GM12878 (cell line): ENCODE measurements at regions of chr4 and their contacts with region 1.

Region 1: DNA sequence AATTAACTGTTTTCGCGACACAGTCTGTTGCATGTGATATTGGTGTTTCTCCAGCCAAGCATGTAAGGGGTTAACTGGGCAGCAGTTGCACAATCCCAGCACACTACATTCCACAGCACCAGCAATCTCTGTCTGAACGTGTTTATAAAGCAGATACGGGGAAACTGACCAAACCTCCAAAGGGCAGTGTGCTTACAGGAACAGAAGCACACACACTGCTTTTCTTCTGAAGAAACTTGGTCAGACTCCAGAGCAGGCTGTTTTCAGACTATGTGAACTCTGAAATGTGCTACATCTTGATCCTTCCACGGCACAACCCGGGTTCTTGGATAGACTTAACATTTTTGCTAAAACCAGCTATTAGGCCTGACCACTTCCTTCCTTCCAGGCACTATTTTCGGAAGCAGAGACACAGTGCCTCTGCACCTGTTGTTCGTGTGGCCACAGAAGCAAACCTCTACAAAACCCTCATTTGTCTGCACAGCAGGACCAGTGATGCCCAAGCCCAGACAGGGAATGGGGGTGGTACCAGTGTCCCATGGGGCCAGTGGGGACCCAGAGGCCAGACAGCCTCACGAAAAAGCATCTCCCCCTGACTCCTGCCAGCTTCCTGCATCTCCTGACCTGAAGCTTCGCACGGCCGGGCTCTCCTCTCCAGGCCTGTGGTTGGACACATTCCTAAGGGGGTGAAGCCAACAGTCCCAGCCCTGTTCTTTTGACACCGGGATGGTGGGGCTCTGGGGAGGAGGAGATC is 90.1 kb downstream of the IRF2 start:
- DNase-seq: peak; percentile 92
- ATAC-seq: peak; percentile 77
- H3K4me3 ChIP-seq: peak overlapping the region; percentile 59; the same call in 1 of the 2 replicates
- H3K27ac ChIP-seq: peak overlapping the region; percentile 88
- H3K4me1 ChIP-seq: peaks cover 68% of the 10 kb centered on the region
- H3K27me3 ChIP-seq: no peaks in the 10 kb centered on the region
- CTCF ChIP-seq: no peak
- EP300 ChIP-seq: peak; percentile 76 to 86
- POLR2A ChIP-seq: peak; percentile 70
- RAD21 ChIP-seq: no peak

Region 2: DNA sequence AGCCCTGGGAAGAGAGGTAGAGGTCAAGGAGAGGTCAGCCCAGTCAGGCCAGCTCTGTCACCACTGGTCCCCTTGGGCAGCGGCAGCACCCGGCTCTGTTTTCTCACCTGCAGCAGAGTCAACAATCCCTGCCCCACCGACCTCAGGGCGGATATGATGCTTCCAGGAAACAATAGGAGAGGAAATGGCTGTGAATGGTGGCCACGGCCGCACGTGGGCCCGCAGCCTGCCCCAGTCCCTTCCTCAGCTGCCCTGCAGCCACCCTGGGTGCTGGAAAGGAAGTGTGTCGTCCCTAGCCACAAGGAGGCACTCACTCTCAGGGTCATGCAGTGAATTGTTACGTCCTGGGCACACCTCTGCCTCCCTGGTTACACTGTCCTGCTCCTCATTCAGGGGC is 74.1 kb before region 1 on chr4:
- CTCF ChIA-PET with region 1: interaction called, 5 read pairs
- POLR2A ChIA-PET with region 1: interaction called, 10 read pairs
- RAD21 ChIA-PET with region 1: interaction called, 7 read pairs
- SMC1A ChIA-PET with region 1: interaction called, 48 read pairs
- in situ Hi-C with region 1: no loop called
- intact Hi-C with region 1: loop called (anchors 2 kb)
- DNase-seq: no peak
- ATAC-seq: peak; percentile 61
- H3K4me3 ChIP-seq: peak overlapping the region; percentile 75; the same call in 1 of the 2 replicates
- H3K27ac ChIP-seq: peak overlapping the region; percentile 94
- H3K4me1 ChIP-seq: peaks cover 47% of the 10 kb centered on the region
- H3K27me3 ChIP-seq: no peaks in the 10 kb centered on the region
- CTCF ChIP-seq: peak; percentile 49 to 59 (median 49)
- EP300 ChIP-seq: no peak
- POLR2A ChIP-seq: peak; percentile 33; the same call in 1 of the 2 replicates
- RAD21 ChIP-seq: peak; percentile 65

Region 3: DNA sequence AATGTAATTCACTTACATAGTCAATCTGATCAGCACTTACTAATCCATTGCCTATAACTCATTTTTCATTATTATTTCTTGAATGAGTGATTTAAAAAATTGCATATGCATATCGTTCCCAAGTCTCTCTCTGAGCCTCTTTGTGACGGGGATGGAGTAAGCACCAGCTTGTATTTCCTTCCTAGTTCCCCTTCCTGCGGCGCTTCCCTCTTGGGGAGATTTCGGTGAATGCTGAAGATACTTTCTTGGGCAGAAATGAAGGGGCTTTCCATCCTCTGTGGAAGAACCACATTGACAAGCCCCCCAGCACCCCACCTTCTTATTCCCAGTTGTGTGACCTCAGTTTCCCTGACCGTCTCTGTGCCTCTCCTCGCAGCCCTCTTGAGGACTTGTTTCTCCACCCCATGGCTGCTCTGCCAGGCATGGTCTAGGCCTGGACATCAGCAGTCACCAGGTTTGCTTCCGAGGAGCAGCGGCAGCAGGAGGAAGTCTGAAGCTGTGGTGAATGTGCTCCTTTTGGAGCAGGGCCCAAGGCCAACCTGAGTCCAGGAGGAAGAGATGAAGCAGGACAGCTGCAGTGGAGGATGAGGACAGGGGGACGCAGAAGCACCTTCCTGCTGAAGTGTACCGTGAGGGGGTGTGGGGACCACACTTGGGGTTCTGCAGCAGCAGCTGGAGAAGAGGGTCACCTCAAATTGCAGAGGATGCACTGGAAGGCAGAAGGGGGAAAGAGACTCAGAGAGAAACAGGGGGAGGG is 34.8 kb before region 1 on chr4:
- CTCF ChIA-PET with region 1: interaction called, 11 read pairs
- POLR2A ChIA-PET with region 1: interaction called, 114 read pairs
- RAD21 ChIA-PET with region 1: interaction called, 92 read pairs
- SMC1A ChIA-PET with region 1: interaction called, 184 read pairs
- in situ Hi-C with region 1: no loop called
- intact Hi-C with region 1: loop called (anchors 1 kb)
- DNase-seq: no peak
- ATAC-seq: no peak
- H3K4me3 ChIP-seq: peak overlapping the region; percentile 89
- H3K27ac ChIP-seq: peak overlapping the region; percentile 99
- H3K4me1 ChIP-seq: peaks cover 50% of the 10 kb centered on the region
- H3K27me3 ChIP-seq: no peaks in the 10 kb centered on the region
- CTCF ChIP-seq: no peak
- EP300 ChIP-seq: no peak
- POLR2A ChIP-seq: no peak
- RAD21 ChIP-seq: no peak

Region 4: DNA sequence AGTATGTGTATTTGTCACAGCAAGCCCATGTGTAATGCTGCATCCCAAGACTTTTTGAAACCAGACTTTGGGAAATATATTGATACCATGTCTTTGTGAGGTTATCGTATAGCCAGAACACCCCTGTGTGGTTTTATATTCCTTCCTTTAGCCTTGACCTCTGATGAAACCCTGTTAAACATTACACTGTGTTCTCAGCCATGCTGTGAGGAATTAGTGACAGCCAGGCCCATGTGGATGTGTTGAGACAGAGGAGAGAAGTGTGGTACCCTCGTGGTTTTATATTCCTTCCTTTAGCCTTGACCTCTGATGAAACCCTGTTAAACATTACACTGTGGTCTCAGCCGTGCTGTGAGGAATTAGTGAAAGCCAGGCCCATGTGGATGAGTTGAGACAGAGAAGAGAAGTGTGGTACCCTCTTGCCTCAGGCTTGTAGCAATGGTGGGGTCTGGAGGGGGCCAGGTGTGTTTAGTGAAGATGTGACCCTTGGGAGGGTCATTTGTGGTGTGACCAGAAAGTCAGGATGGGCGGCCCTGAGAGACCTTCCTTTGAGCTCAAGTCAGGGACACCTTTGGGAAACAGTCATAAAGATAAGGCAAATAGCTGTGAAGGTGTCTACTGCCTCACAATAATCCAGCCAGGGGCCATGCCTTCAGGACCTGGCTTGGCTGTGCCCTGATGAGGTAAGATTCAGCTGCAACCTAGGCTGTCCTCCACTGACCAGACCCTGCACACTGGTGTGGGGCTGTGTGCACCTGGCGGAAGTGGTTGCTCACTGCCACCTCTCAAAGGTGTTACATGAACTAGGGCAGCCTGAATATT is 19.9 kb before region 1 on chr4:
- CTCF ChIA-PET with region 1: interaction called, 10 read pairs
- POLR2A ChIA-PET with region 1: interaction called, 6 read pairs
- RAD21 ChIA-PET with region 1: interaction called, 14 read pairs
- SMC1A ChIA-PET with region 1: interaction called, 30 read pairs
- in situ Hi-C with region 1: no loop called
- intact Hi-C with region 1: no loop called
- DNase-seq: no peak
- ATAC-seq: peak; percentile 85
- H3K4me3 ChIP-seq: no peak overlapping the region
- H3K27ac ChIP-seq: no peak overlapping the region
- H3K4me1 ChIP-seq: no peaks in the 10 kb centered on the region
- H3K27me3 ChIP-seq: no peaks in the 10 kb centered on the region
- CTCF ChIP-seq: no peak
- EP300 ChIP-seq: no peak
- POLR2A ChIP-seq: no peak
- RAD21 ChIP-seq: no peak

Region 5: GRCh38 chr4:184395971-184396391 is 11.7 kb after region 1 on chr4:
- CTCF ChIA-PET with region 1: interaction called, 6 read pairs
- POLR2A ChIA-PET with region 1: interaction called, 16 read pairs
- RAD21 ChIA-PET with region 1: interaction called, 22 read pairs
- SMC1A ChIA-PET with region 1: interaction called, 15 read pairs
- in situ Hi-C with region 1: no loop called
- intact Hi-C with region 1: no loop called
- DNase-seq: peak; percentile 81
- ATAC-seq: peak; percentile 89
- H3K4me3 ChIP-seq: peak overlapping the region; percentile 29
- H3K27ac ChIP-seq: peak overlapping the region; percentile 76
- H3K4me1 ChIP-seq: peaks cover 29% of the 10 kb centered on the region
- H3K27me3 ChIP-seq: no peaks in the 10 kb centered on the region
- CTCF ChIP-seq: no peak
- EP300 ChIP-seq: no peak
- POLR2A ChIP-seq: peak; percentile 63; the same call in 1 of the 2 replicates
- RAD21 ChIP-seq: no peak